ENCODE measurements at regions of chr1 and their contacts with region 1.

Region 1: DNA sequence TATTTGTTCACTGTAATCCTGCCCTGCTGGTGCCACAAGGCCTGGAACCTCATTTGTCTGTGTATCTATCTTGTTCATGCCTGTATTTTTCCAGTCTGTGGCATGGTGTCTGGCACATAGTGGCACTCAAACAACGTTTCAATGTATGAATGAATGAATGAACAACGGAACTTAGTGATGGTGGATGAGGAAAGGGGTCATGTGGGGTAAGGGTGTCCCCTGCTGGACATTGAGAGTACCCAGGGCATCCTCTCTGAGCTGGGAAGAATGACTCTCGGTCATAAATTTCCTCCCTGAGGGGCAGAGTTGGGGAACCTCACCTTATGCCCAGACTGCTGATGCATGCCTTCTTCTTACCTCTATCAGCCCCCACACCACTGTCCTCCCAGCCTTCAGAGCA is 18.9 kb upstream of the ZNF683 start:
- DNase-seq: peak; percentile 71 to 84 (median 78)
- ATAC-seq: peak; percentile 89
- H3K4me3 ChIP-seq: no peak overlapping the region
- H3K27ac ChIP-seq: no peak overlapping the region
- H3K4me1 ChIP-seq: peaks cover 2 to 10% of the 10 kb centered on the region in 2 experiments
- H3K27me3 ChIP-seq: no peaks in the 10 kb centered on the region
- CTCF ChIP-seq: peak; percentile 91 to 99 (median 98)
- EP300 ChIP-seq: 0 out of 2 replicates have a peak, but pooled peaks have one; percentile 4
- POLR2A ChIP-seq: no peak
- RAD21 ChIP-seq: peak; percentile 97 to 100

Region 2: DNA sequence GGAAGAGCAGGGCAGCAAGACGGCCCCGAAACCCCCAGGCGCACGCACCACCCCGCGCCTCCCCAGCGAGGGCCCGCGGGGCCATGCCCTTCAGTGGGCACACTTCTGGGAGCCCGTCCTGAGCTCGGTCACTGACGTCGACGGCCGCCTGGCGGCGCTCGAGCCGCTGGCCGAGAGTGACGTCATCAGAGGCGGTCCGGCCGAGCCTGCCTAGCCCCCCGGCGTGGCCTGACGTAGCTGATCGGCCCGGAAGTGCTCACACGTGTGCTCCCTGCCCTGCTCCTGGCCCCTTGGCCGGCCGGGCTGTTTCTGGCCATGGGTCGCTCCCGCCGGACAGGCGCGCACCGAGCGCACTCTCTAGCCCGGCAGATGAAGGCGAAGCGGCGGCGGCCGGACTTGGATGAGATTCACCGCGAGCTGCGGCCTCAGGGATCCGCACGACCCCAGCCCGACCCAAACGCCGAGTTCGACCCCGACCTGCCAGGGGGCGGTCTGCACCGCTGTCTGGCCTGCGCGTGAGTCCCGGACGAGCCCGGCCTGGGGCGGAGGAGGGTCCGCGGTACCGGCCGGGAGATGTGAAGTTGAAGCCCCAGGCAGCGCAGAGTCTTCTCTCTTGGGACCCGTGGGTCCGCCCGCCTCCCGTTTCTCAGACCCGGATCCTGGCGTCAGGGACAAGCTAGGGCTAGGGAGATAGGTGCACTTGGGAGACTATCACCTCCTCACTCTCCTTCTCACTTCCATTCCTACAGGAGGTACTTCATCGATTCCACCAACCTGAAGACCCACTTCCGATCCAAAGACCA is 221.6 kb before region 1 on chr1 and contains the start of gene ZNF593:
- CTCF ChIA-PET with region 1: no interaction called
- POLR2A ChIA-PET with region 1: interaction called, 3 read pairs
- in situ Hi-C with region 1: no loop called
- intact Hi-C with region 1: loop called (anchors 10 kb)
- DNase-seq: peak; percentile 97 to 99 (median 99)
- ATAC-seq: peak; percentile 96
- H3K4me3 ChIP-seq: peak within 1 kb of the TSS; percentile 89
- H3K27ac ChIP-seq: peak within 1 kb of the TSS; percentile 85
- H3K4me1 ChIP-seq: peaks cover 22 to 37% of the 10 kb centered on the region in 2 experiments
- H3K27me3 ChIP-seq: no peaks in the 10 kb centered on the region
- CTCF ChIP-seq: peak; percentile 96 to 99 (median 98)
- EP300 ChIP-seq: peak; percentile 35; the same call in 1 of the 2 replicates
- POLR2A ChIP-seq: peak; percentile 93
- RAD21 ChIP-seq: peak; percentile 62 to 72
- polyA plus RNA-seq, gene ZNF593: 9.8 to 27.1 TPM

Region 3: DNA sequence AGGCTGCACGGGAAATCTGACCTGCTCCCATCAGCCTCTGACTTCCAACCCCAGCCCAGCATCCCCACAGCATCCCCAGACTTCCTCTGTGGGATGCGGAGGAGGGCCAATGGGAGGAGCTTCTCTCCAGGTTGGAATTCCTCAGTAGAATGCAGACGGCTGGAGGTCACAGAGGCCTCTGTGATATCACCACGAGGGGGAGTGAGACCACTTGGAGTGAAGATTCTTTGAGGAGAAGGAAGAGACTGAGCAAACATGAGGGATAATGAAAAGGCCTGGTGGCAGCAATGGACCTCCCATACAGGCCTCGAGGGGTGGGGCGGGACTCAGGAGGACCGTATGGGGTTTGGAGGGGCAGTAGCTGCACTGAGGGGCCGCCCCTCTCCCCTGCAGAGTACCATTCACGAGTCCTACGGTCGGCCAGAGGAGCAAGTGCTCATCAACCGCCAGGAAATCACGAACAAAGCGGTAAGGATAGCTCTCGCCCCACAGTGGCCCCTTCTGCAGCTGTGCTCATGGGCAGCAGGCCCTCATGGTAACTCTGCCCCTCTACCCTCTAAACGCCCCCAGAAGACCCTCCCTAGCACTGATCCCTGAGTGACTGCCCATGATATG is 201.0 kb before region 1 on chr1 and contains the start of gene CATSPER4:
- CTCF ChIA-PET with region 1: interaction called, 4 read pairs
- POLR2A ChIA-PET with region 1: no interaction called
- in situ Hi-C with region 1: no loop called
- intact Hi-C with region 1: loop called (anchors 1 kb)
- DNase-seq: peak; percentile 73 to 75 (median 74)
- ATAC-seq: peak; percentile 87
- H3K4me3 ChIP-seq: no peak within 1 kb of the TSS
- H3K27ac ChIP-seq: no peak within 1 kb of the TSS
- H3K4me1 ChIP-seq: peaks cover 0 to 23% of the 10 kb centered on the region in 2 experiments; a peak in 2 of 5 replicates
- H3K27me3 ChIP-seq: no peaks in the 10 kb centered on the region
- CTCF ChIP-seq: peak; percentile 68 to 82 (median 74)
- EP300 ChIP-seq: no peak
- POLR2A ChIP-seq: no peak
- RAD21 ChIP-seq: peak; percentile 57 to 82
- polyA plus RNA-seq, gene CATSPER4: 0.04 TPM in 1 of 2 experiments, not detected in the other

Region 4: GRCh38 chr1:26279456-26280332 is 111.8 kb before region 1 on chr1 and contains the start of gene SH3BGRL3:
- CTCF ChIA-PET with region 1: interaction called, 22 read pairs
- POLR2A ChIA-PET with region 1: interaction called, 3 read pairs
- in situ Hi-C with region 1: loop called (anchors 5 kb)
- intact Hi-C with region 1: loop called (anchors 1 kb)
- DNase-seq: peak; percentile 93 to 96 (median 96)
- ATAC-seq: peak; percentile 87
- H3K4me3 ChIP-seq: peak within 1 kb of the TSS; percentile 47
- H3K27ac ChIP-seq: peak within 1 kb of the TSS; percentile 81
- H3K4me1 ChIP-seq: peaks cover 81 to 83% of the 10 kb centered on the region in 2 experiments
- H3K27me3 ChIP-seq: no peaks in the 10 kb centered on the region
- CTCF ChIP-seq: peak; percentile 66 to 83 (median 69)
- EP300 ChIP-seq: peak; percentile 13; the same call in 1 of the 2 replicates
- POLR2A ChIP-seq: peak; percentile 84
- RAD21 ChIP-seq: peak; percentile 35 to 40; a peak in 2 of 4 replicates
- polyA plus RNA-seq, gene SH3BGRL3: 106 to 137 TPM

Region 5: GRCh38 chr1:26284597-26285360 is 106.7 kb before region 1 on chr1:
- CTCF ChIA-PET with region 1: interaction called, 18 read pairs
- POLR2A ChIA-PET with region 1: interaction called, 3 read pairs
- in situ Hi-C with region 1: loop called (anchors 5 kb)
- intact Hi-C with region 1: loop called (anchors 2 kb)
- DNase-seq: peak; percentile 91 to 99 (median 93)
- ATAC-seq: peak; percentile 73
- H3K4me3 ChIP-seq: no peak overlapping the region
- H3K27ac ChIP-seq: peak overlapping the region; percentile 86
- H3K4me1 ChIP-seq: peaks cover 84 to 99% of the 10 kb centered on the region in 2 experiments
- H3K27me3 ChIP-seq: no peaks in the 10 kb centered on the region
- CTCF ChIP-seq: peak; percentile 89 to 97 (median 92)
- EP300 ChIP-seq: peak; percentile 91
- POLR2A ChIP-seq: peak; percentile 27; the same call in 1 of the 2 replicates
- RAD21 ChIP-seq: peak; percentile 79 to 92

Region 6: DNA sequence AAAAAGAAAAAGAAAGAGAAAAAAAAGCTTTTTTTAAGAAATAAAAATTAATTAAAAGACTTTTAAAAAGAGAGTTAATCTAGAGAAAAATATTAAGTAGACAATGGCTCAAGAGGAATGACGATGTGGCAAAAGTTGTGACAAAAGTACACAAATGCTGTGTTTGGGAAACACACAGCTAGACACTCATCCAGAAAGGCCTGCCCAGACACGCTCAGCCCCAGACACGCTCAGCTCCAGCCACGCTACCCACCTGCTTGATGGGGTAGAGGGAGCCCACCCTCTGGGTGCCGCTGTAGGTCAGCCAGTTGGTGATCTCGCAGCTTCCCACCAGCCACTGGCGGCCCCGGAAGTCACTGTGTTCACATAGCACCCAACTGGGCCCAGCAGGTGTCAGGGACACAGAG is 63.5 kb before region 1 on chr1:
- CTCF ChIA-PET with region 1: no interaction called
- POLR2A ChIA-PET with region 1: interaction called, 3 read pairs
- in situ Hi-C with region 1: no loop called
- intact Hi-C with region 1: loop called (anchors 1 kb)
- DNase-seq: peak in 1 of 4 experiments; percentile 45
- ATAC-seq: peak; percentile 54
- H3K4me3 ChIP-seq: no peak overlapping the region
- H3K27ac ChIP-seq: no peak overlapping the region
- H3K4me1 ChIP-seq: peaks cover 2 to 13% of the 10 kb centered on the region in 2 experiments; a peak in 3 of 5 replicates
- H3K27me3 ChIP-seq: no peaks in the 10 kb centered on the region
- CTCF ChIP-seq: peak; percentile 33 to 46 (median 36); a peak in 4 of 6 replicates
- EP300 ChIP-seq: no peak
- POLR2A ChIP-seq: no peak
- RAD21 ChIP-seq: peak in 1 of 2 experiments; percentile 31; a peak in 2 of 4 replicates

Region 7: GRCh38 chr1:26363549-26364448 is 27.7 kb before region 1 on chr1:
- CTCF ChIA-PET with region 1: no interaction called
- POLR2A ChIA-PET with region 1: no interaction called
- in situ Hi-C with region 1: no loop called
- intact Hi-C with region 1: loop called (anchors 1 kb)
- DNase-seq: peak; percentile 88 to 95 (median 90)
- ATAC-seq: peak; percentile 96
- H3K4me3 ChIP-seq: no peak overlapping the region
- H3K27ac ChIP-seq: no peak overlapping the region
- H3K4me1 ChIP-seq: peaks cover 4 to 34% of the 10 kb centered on the region in 2 experiments; a peak in 4 of 5 replicates
- H3K27me3 ChIP-seq: no peaks in the 10 kb centered on the region; a peak in 1 of 5 replicates
- CTCF ChIP-seq: peak; percentile 97 to 100 (median 99)
- EP300 ChIP-seq: 0 out of 2 replicates have a peak, but pooled peaks have one; percentile 29
- POLR2A ChIP-seq: no peak
- RAD21 ChIP-seq: peak; percentile 89 to 98